ENCODE measurements at regions of chr7 and their contacts with region 1.

Region 1: DNA sequence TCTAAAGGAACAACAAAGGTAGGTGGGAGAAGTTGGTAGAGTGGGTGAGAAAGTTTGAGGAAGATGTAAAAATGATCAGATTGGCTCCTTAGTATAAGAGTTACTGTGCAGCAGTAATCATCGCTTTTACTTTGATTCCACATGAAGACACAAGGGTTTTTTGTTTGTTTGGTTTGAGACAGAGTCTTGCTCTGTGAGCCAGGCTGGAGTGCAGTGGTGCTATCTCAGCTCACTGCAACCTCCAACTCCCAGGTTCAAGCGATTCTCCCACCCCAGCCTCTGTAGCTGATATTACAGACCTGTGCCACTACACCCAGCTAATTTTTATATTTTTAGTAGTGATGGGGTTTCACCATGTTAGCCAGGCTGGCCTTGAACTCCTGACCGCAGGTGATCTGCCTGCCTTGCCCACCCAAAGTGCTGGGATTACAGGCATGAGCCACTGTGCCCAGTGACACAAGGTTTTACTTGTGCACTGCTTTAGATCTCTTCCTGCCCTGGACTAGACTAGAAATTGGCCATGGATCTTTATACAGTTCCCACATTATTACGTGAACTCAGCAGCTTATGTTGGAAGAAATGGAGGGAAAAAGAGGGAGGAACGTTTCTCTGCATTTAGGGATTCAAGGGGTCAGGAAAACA is 10.7 kb downstream of the LUC7L2 start:
- DNase-seq: no peak
- ATAC-seq: no peak
- H3K4me3 ChIP-seq: no peak overlapping the region
- H3K27ac ChIP-seq: no peak overlapping the region
- H3K4me1 ChIP-seq: no peaks in the 10 kb centered on the region
- H3K27me3 ChIP-seq: no peaks in the 10 kb centered on the region
- CTCF ChIP-seq: no peak

Region 2: GRCh38 chr7:139183878-139184338 is 186.5 kb before region 1 on chr7:
- CTCF ChIA-PET with region 1: no interaction called
- POLR2A ChIA-PET with region 1: no interaction called
- intact Hi-C with region 1: no loop called
- DNase-seq: no peak
- ATAC-seq: no peak
- H3K4me3 ChIP-seq: no peak overlapping the region
- H3K27ac ChIP-seq: no peak overlapping the region
- H3K4me1 ChIP-seq: peaks cover 19% of the 10 kb centered on the region
- H3K27me3 ChIP-seq: no peaks in the 10 kb centered on the region
- CTCF ChIP-seq: no peak

Region 3: GRCh38 chr7:139393621-139394211 is 23.3 kb after region 1 on chr7:
- CTCF ChIA-PET with region 1: no interaction called
- POLR2A ChIA-PET with region 1: interaction called, 12 read pairs
- intact Hi-C with region 1: no loop called
- DNase-seq: no peak
- ATAC-seq: peak; percentile 53
- H3K4me3 ChIP-seq: no peak overlapping the region
- H3K27ac ChIP-seq: no peak overlapping the region
- H3K4me1 ChIP-seq: no peaks in the 10 kb centered on the region
- H3K27me3 ChIP-seq: no peaks in the 10 kb centered on the region
- CTCF ChIP-seq: no peak

Region 4: DNA sequence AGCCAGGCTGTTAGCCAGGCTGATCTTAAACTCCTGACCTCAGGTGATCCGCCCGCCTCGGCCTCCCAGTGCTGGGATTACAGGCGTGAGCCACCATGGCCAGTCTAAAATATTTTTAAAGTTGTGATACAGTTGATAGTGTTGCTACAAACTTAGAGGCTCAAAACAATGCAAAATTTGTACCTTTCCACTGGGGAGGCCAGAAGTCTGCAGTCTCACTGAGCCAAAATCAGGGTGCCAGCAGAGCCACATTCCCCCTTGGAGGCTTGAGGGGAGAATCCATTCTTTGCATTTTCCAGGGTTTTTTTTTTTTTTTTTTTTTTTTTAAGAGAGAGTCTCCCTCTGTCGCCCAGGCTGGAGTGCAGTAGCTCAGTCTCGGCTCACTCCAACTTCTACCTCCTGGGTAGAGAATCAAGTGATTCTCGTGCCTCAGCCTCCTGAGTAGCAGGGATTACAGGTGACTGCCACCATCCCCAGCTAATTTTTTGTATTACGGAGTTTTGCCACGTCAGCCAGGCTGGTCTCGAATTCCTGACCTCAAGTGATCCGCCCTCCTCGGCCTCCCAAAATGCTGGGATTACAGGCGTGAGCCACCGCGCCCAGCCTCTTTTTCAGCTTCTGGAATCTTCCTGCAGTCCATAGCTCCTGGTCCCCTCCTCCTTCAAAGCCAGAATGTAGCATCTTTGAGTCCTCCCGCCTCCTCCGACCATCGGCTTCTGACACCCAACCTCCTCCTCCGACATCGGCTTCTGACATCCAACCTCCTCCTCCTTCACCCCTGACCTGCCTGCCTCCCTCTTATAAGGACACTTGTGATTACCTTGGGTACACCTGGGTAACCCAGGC is 75.8 kb after region 1 on chr7:
- CTCF ChIA-PET with region 1: no interaction called
- POLR2A ChIA-PET with region 1: interaction called, 17 read pairs
- intact Hi-C with region 1: no loop called
- DNase-seq: no peak
- ATAC-seq: no peak
- H3K4me3 ChIP-seq: no peak overlapping the region
- H3K27ac ChIP-seq: no peak overlapping the region
- H3K4me1 ChIP-seq: no peaks in the 10 kb centered on the region
- H3K27me3 ChIP-seq: no peaks in the 10 kb centered on the region
- CTCF ChIP-seq: no peak